RWPE1 (cell line): ENCODE measurements at regions of chr12 and their contacts with region 1.

Region 1: DNA sequence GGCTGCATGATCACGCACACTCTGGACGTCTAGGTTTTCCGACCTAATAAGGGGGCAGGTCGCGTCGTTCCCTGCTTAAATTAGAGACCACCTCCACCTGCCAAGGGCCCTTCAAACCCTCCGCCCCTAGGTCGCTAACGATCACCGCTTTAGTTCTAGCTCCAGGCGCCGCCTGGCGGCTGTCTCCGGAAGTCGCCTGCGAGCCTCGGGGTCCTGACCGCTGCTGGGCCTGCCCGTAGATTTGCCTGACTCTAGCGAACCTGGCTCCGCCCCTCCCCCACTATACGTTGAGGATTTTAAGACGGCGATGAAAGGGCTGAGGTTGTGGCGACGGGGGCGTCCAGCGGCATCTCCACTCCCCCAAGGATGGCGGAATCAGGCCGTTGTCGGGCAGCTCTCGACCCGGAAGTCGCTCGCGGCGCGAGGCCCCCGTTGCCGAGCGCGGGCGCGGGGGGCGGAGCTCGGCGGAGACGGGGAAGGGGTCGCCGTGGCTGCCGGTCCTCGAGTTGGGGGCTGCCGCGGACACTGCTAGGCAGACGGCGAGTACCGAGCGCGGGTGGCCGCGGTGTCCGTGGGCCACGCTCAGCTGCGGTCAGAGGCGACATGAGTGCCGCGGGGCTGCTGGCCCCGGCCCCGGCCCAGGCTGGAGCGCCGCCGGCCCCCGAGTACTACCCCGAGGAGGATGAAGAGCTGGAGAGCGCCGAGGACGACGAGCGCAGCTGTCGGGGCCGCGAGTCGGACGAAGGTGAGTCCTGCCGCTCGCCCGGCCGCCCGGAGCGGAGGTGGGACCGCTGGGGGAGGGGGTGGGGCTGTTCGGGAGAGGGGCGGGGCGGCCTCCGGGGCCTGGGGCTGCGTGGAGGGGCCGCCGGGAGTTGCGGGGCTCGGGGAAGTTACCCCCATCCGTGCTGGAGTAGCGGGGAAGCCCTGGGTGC is at the start of gene SUDS3:
- DNase-seq: peak; percentile 82
- H3K27ac ChIP-seq: peak within 1 kb of the TSS; percentile 84
- CTCF ChIP-seq: peak; percentile 95

Region 2: GRCh38 chr12:118109088-118109487 is 267.3 kb before region 1 on chr12:
- CTCF ChIA-PET with region 1: no interaction called
- POLR2A ChIA-PET with region 1: no interaction called
- DNase-seq: no peak
- H3K27ac ChIP-seq: no peak overlapping the region
- CTCF ChIP-seq: no peak

Region 3: GRCh38 chr12:118135788-118136558 is 240.4 kb before region 1 on chr12 and contains the start of gene PEBP1:
- CTCF ChIA-PET with region 1: interaction called, 11 read pairs
- POLR2A ChIA-PET with region 1: interaction called, 3 read pairs
- DNase-seq: peak; percentile 94
- H3K27ac ChIP-seq: peak within 1 kb of the TSS; percentile 73
- CTCF ChIP-seq: no peak

Region 4: DNA sequence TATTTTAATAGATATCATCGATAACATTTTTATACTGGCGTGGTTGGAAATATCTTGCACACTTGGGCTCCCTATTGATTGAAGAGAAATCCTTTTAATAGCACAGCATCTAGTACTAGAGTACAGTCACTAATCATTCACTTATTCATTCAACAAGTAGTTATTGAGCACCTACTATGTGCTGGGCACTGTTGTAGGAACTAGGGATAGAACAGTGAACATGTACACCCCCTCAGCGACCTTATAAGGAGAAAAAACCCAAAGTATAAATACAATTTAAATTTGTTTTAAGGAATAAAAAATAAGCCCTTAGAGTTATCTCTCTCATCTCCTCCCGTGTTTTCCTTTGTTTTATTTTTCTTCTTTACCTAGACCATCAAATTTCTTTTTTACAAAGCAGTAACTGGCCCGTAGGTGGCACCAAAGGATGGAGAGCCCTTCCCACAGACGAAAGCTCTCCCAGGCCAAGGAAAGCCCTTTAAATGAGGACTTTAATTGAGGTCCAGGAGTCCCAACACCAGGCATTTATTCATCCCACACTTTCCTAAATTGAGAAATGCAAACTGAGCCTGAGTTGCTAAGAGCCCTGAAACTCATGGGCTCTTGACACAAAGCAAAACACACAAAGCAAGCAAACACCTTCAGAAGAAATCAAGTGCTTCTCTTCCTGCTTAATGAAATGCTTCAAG is 211.4 kb before region 1 on chr12:
- CTCF ChIA-PET with region 1: interaction called, 20 read pairs
- POLR2A ChIA-PET with region 1: no interaction called
- DNase-seq: peak; percentile 48
- H3K27ac ChIP-seq: no peak overlapping the region
- CTCF ChIP-seq: peak; percentile 67

Region 5: DNA sequence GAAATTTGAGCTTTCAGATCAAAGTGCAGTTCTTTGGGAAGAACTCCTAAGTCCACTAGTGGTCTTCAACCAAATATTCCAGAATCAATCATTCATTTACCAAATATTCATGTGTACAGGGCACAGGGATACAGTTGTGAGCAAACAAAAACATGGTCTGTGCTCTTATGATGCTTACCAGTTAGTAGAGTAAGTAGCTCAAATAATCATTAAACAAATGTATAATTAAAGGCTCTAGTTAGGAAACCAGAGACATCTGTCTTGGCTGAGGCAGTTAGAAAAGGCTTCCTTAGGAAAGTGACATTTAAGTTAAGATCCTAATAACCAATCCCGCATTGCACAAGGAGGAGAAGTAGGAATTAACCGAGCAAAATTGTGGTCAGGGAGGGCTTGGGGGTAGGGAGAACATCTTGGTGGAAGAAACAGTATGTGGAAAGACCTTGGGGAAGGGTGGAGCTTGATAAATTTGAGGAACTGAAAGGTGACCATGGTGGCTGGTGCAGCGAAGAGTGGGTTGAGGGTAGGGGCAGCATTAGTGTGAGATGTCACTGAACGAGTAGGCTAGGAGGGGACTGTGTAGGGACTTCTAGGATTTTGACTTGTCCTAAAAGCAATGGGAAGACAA is 200.4 kb before region 1 on chr12:
- CTCF ChIA-PET with region 1: interaction called, 13 read pairs
- POLR2A ChIA-PET with region 1: no interaction called
- DNase-seq: no peak
- H3K27ac ChIP-seq: no peak overlapping the region
- CTCF ChIP-seq: no peak

Region 6: GRCh38 chr12:118183705-118184104 is 192.7 kb before region 1 on chr12:
- CTCF ChIA-PET with region 1: interaction called, 27 read pairs
- POLR2A ChIA-PET with region 1: no interaction called
- DNase-seq: no peak
- H3K27ac ChIP-seq: no peak overlapping the region
- CTCF ChIP-seq: no peak

Region 7: DNA sequence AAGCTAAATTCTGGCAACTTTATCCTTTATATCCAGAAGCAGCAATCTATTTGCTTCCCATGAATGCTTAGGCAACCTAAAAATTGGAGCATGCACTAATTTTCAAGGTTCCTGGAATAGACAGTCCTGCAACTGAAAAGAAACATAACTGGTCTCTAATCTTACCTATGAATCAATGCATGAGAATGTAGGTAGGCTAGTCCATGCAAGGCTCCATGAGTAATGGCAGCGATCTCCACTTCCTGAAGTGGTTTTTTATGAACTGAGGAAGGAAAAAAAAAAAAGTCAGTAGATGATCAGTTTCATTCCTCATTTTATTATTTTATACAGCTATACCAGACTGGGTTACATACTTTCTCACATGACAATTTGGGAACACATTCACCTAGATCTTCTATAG is 138.4 kb before region 1 on chr12:
- CTCF ChIA-PET with region 1: interaction called, 11 read pairs
- POLR2A ChIA-PET with region 1: no interaction called
- DNase-seq: peak; percentile 78
- H3K27ac ChIP-seq: no peak overlapping the region
- CTCF ChIP-seq: no peak

Region 8: GRCh38 chr12:118391424-118391823 is 15.1 kb after region 1 on chr12:
- CTCF ChIA-PET with region 1: interaction called, 10 read pairs
- POLR2A ChIA-PET with region 1: no interaction called
- DNase-seq: no peak
- H3K27ac ChIP-seq: no peak overlapping the region
- CTCF ChIP-seq: no peak